Activated CD4-positive, alpha-beta T cell treated with anti-CD3 and anti-CD28 coated beads, Interleukin-2, amount 10 ng/mL, durations not matched to agents 24 days and 14 days (primary cell): ENCODE measurements at regions of chr11 and their contacts with region 1.

Region 1: GRCh38 chr11:1852877-1853276 is at the start of gene LSP1:
- DNase-seq: peak; percentile 96
- H3K4me3 Mint-ChIP-seq: peak within 1 kb of the TSS; percentile 93
- H3K27ac Mint-ChIP-seq: peak within 1 kb of the TSS; percentile 99
- H3K4me1 Mint-ChIP-seq: peaks cover 42% of the 10 kb centered on the region
- H3K27me3 Mint-ChIP-seq: no peaks in the 10 kb centered on the region
- total RNA-seq, gene LSP1: 303 and 322 TPM in 2 replicates

Region 2: GRCh38 chr11:1757861-1758610 is 94.8 kb before region 1 on chr11:
- intact Hi-C with region 1: loop called (anchors 2 kb)
- DNase-seq: peak; percentile 86
- H3K4me3 Mint-ChIP-seq: peak overlapping the region; percentile 79
- H3K27ac Mint-ChIP-seq: peak overlapping the region; percentile 91
- H3K4me1 Mint-ChIP-seq: peaks cover 53% of the 10 kb centered on the region
- H3K27me3 Mint-ChIP-seq: no peaks in the 10 kb centered on the region

Region 3: GRCh38 chr11:1917671-1918516 is 65.0 kb after region 1 on chr11:
- intact Hi-C with region 1: loop called (anchors 5 kb)
- DNase-seq: no peak
- H3K4me3 Mint-ChIP-seq: no peak overlapping the region
- H3K27ac Mint-ChIP-seq: no peak overlapping the region
- H3K4me1 Mint-ChIP-seq: peaks cover 5% of the 10 kb centered on the region
- H3K27me3 Mint-ChIP-seq: no peaks in the 10 kb centered on the region

Region 4: DNA sequence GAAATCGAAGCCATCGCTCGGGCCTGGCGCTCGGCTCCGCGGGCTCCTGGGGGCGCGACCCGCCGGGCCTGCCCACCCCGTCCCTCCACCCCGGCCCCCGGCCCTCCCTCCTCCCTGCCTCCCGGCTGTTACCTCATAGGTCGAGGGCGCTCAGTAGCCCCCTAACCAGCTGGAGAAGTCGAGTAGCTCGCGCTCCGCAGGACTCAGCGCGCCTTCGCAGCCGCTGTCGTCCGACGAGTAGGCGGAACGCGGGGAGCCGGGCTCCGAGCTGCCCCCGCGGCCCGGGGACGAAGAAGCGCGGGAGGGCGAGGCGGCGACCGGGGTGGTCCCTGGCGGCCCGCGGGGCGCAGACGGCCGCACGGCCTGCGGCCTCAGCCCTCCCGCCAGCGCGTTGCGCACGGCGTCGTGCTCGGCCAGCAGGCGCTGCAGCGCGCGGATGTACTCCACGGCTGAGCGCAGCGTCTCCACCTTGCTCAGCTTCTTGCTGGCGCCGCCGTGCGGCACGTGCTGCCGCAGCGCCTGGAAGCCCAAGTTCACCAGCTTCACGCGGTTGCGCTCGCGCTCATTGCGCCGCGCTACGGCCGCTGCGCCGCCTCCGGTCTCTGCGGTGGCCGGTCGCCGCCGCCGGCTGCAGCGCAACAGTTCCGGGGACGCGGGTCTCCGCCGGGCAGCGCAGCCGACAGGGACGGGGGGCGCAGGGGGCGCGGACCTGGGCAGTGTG is 416.9 kb after region 1 on chr11:
- intact Hi-C with region 1: loop called (anchors 5 kb)
- DNase-seq: peak; percentile 84
- H3K4me3 Mint-ChIP-seq: peak overlapping the region; percentile 70
- H3K27ac Mint-ChIP-seq: peak overlapping the region; percentile 70
- H3K4me1 Mint-ChIP-seq: peaks cover 19% of the 10 kb centered on the region
- H3K27me3 Mint-ChIP-seq: peaks cover 30% of the 10 kb centered on the region